ENCODE measurements at regions of chr17 and their contacts with region 1.

Region 1: GRCh38 chr17:55513885-55514591 is 2.8 kb upstream of the SMIM36 start:
- DNase-seq: peak; percentile 72 to 84
- H3K4me3 ChIP-seq: no peak overlapping the region
- H3K4me3 Mint-ChIP-seq: no peak overlapping the region
- H3K27ac Mint-ChIP-seq: no peak overlapping the region
- H3K4me1 ChIP-seq: peaks cover 6% of the 10 kb centered on the region; the same call in 1 of the 2 replicates
- H3K4me1 Mint-ChIP-seq: peaks cover 8% of the 10 kb centered on the region
- H3K27me3 ChIP-seq: no peaks in the 10 kb centered on the region
- H3K27me3 Mint-ChIP-seq: no peaks in the 10 kb centered on the region
- CTCF ChIP-seq: peak; percentile 89 to 96

Region 2: GRCh38 chr17:54992797-54993639 is 521.0 kb before region 1 on chr17:
- CTCF ChIA-PET with region 1: no interaction called
- POLR2A ChIA-PET with region 1: no interaction called
- intact Hi-C with region 1: loop called (anchors 1 kb)
- DNase-seq: peak in 1 of 2 experiments; percentile 56
- H3K4me3 ChIP-seq: no peak overlapping the region
- H3K4me3 Mint-ChIP-seq: no peak overlapping the region
- H3K27ac Mint-ChIP-seq: no peak overlapping the region
- H3K4me1 ChIP-seq: no peaks in the 10 kb centered on the region
- H3K4me1 Mint-ChIP-seq: no peaks in the 10 kb centered on the region
- H3K27me3 ChIP-seq: no peaks in the 10 kb centered on the region
- H3K27me3 Mint-ChIP-seq: no peaks in the 10 kb centered on the region
- CTCF ChIP-seq: peak; percentile 60 to 64

Region 3: GRCh38 chr17:55093353-55093752 is 420.7 kb before region 1 on chr17:
- CTCF ChIA-PET with region 1: no interaction called
- POLR2A ChIA-PET with region 1: no interaction called
- intact Hi-C with region 1: no loop called
- DNase-seq: no peak
- H3K4me3 ChIP-seq: no peak overlapping the region
- H3K4me3 Mint-ChIP-seq: no peak overlapping the region
- H3K27ac Mint-ChIP-seq: no peak overlapping the region
- H3K4me1 ChIP-seq: no peaks in the 10 kb centered on the region
- H3K4me1 Mint-ChIP-seq: peaks cover 7% of the 10 kb centered on the region
- H3K27me3 ChIP-seq: no peaks in the 10 kb centered on the region
- H3K27me3 Mint-ChIP-seq: no peaks in the 10 kb centered on the region
- CTCF ChIP-seq: no peak

Region 4: DNA sequence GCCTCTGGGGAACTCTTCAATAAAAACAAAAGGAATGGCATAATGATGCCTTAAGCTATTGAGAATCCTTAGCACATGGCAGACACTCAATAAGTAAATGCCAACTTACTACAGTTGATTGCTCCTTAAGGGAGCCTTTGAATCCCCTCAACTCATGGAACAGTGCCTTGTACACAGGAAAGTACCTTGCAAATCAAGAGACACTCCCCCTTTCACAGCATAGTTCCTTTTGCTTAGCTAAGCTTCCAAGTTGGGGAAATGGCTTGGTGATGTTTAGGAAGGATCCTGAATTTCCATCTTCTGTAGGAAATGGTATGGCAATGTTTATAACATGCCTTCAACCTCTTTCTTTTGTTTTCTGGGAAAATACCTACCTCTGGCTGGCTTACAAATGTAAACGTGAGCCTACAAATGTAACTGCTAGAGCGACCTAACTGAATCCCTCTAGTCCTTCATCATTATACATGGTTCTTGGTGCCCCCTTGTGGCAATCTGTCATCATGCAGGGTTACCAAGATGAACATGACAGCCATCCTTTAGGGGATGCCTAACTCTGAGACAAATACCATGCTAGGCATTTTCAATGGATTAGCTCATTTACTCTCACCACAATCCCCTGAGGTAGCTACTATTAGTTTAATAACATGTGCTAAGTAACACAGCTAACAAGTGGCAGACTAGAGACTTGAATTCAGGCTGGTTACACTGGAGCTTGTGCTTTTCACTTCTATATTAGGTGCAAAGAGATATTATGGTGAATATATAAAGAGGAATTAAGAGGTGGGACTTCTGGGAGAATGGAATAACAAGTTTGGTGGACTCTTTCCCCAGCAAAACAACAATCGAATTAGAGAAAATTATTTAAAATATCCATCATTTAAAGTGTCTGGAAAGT is 157.4 kb before region 1 on chr17:
- CTCF ChIA-PET with region 1: interaction called, 9 read pairs
- POLR2A ChIA-PET with region 1: no interaction called
- intact Hi-C with region 1: loop called (anchors 1 kb)
- DNase-seq: peak; percentile 80 to 84
- H3K4me3 ChIP-seq: no peak overlapping the region
- H3K4me3 Mint-ChIP-seq: no peak overlapping the region
- H3K27ac Mint-ChIP-seq: no peak overlapping the region
- H3K4me1 ChIP-seq: no peaks in the 10 kb centered on the region
- H3K4me1 Mint-ChIP-seq: peaks cover 6% of the 10 kb centered on the region
- H3K27me3 ChIP-seq: no peaks in the 10 kb centered on the region
- H3K27me3 Mint-ChIP-seq: no peaks in the 10 kb centered on the region
- CTCF ChIP-seq: peak; percentile 80 to 85

Region 5: DNA sequence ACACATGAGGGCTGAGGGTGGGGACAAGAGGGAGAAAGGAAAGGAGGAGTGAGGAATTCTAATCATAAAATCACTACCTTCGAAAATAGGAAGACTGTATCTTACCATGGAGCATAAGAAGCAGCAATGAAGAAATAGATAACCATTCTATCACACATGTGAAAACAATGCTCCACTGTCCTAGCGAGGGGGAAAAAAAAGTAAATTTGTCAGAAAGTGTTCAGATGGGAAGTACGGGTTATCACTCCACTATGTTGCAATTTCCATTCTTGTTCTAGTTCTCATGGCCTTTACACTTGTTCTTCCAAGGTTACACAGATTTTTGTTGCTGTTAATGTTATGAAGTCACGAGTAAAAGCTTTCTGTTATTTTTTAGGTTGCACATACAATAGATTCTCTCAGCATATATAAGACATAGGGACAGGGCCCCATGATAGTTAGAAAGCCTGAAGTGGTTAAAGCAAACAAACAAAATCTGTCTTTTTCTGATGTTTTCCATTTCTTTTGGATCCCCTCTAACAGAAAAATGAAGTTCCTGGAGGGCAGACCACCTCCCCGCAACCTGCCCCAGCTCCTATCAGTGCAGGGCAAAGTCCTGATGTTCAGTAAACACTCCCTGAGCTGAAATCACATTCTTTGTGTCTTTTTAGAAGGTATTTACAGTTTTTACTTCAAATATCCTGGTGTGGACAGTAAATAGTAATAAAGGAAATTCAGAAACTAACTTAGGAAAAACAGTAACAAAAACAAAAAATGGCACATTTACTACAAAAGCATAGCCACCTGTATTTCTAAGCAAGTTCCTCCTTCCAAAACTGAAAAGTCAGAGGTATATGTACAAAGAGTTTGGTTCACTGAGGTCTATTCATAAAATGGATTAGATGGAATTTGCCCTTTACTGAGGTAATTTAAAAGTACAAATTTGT is 106.1 kb before region 1 on chr17:
- CTCF ChIA-PET with region 1: interaction called, 4 read pairs
- POLR2A ChIA-PET with region 1: no interaction called
- intact Hi-C with region 1: loop called (anchors 1 kb)
- DNase-seq: peak in 1 of 2 experiments; percentile 49
- H3K4me3 ChIP-seq: no peak overlapping the region
- H3K4me3 Mint-ChIP-seq: peak overlapping the region; percentile 52
- H3K27ac Mint-ChIP-seq: peak overlapping the region; percentile 72
- H3K4me1 ChIP-seq: peaks cover 35% of the 10 kb centered on the region
- H3K4me1 Mint-ChIP-seq: peaks cover 20% of the 10 kb centered on the region
- H3K27me3 ChIP-seq: no peaks in the 10 kb centered on the region
- H3K27me3 Mint-ChIP-seq: no peaks in the 10 kb centered on the region
- CTCF ChIP-seq: no peak

Region 6: DNA sequence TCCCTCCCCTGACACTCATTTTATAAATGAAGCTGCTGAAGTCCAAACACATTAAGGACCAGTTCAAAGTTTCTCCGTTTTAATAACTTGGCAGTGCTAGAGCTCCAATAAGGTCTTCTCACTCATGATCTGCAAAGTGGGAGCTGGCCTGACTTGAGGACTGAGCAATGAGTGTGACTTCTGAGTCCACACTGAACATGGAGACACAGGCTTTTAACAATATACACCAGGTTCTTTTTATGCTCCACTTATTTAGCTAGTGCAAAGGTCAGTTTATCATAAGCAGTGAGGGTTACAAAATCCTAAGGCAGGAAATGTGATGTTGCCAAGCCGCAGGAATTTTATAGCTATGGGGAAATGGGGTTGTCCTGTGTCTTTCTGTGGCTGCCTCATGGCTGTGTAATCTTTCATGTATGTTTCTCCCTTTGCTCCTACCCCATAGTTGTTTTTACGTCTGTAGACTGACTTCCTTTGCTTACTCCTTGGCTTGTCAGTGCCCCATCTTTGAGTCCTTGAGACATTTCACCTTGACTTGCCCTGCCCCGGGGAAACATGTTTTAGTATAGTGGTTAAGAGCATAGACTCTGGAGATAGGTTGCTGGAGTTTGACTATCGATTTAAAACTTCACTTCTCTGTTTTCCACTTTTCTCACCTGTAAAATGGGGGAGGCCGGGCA is 80.3 kb before region 1 on chr17:
- CTCF ChIA-PET with region 1: interaction called, 8 read pairs
- POLR2A ChIA-PET with region 1: no interaction called
- intact Hi-C with region 1: loop called (anchors 1 kb)
- DNase-seq: peak; percentile 64 to 68
- H3K4me3 ChIP-seq: no peak overlapping the region
- H3K4me3 Mint-ChIP-seq: peak overlapping the region; percentile 58
- H3K27ac Mint-ChIP-seq: peak overlapping the region; percentile 94
- H3K4me1 ChIP-seq: peaks cover 48% of the 10 kb centered on the region
- H3K4me1 Mint-ChIP-seq: peaks cover 51% of the 10 kb centered on the region
- H3K27me3 ChIP-seq: no peaks in the 10 kb centered on the region
- H3K27me3 Mint-ChIP-seq: no peaks in the 10 kb centered on the region
- CTCF ChIP-seq: no peak